AG04450 (cell line): ENCODE measurements at regions of chr1 and their contacts with region 1.

Region 1: DNA sequence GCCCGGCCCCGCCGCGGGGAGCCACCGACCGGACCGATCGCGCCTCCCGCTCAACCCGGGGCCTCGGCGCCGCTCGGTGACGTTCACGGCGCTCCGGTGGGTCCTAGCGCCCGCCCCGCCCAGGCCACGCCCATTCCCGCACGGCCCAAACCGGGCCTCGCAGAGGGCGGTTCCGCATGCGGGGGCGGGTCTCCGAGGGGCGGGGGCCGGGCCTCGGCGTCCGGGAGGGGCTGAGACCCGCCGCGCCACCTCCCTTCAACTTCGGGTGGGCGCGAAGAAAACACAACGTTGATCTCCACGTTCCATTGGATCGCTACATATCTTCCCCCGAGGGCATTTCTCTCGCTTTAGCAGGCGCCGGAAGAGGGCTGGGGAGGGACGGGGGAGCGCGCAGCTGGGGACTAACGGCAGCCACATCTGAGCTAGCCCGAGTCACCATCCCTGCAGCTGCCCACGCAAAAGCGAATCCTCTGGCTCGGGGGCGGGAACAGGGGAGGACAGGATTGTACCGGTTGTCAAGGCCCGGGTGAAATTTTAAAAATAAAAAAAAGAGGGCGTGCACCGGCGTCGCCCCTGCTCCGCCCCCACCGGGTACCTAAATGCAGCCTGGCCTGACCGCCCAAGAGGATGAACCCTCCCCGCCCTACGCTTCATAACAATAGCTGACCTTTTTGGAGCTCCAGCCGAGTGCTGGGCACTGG is at the start of gene MAD2L2:
- DNase-seq: peak; percentile 32
- H3K4me3 ChIP-seq: peak within 1 kb of the TSS; percentile 84
- H3K27ac ChIP-seq: peak within 1 kb of the TSS; percentile 52
- H3K27me3 ChIP-seq: no peaks in the 10 kb centered on the region
- CTCF ChIP-seq: no peak
- polyA plus RNA-seq, gene MAD2L2: 34.9 and 41.7 TPM in 2 replicates

Region 2: GRCh38 chr1:11214698-11215380 is 466.4 kb before region 1 on chr1:
- CTCF ChIA-PET with region 1: no interaction called
- POLR2A ChIA-PET with region 1: no interaction called
- DNase-seq: no peak
- H3K4me3 ChIP-seq: no peak overlapping the region
- H3K27ac ChIP-seq: no peak overlapping the region
- H3K27me3 ChIP-seq: no peaks in the 10 kb centered on the region
- CTCF ChIP-seq: no peak

Region 3: DNA sequence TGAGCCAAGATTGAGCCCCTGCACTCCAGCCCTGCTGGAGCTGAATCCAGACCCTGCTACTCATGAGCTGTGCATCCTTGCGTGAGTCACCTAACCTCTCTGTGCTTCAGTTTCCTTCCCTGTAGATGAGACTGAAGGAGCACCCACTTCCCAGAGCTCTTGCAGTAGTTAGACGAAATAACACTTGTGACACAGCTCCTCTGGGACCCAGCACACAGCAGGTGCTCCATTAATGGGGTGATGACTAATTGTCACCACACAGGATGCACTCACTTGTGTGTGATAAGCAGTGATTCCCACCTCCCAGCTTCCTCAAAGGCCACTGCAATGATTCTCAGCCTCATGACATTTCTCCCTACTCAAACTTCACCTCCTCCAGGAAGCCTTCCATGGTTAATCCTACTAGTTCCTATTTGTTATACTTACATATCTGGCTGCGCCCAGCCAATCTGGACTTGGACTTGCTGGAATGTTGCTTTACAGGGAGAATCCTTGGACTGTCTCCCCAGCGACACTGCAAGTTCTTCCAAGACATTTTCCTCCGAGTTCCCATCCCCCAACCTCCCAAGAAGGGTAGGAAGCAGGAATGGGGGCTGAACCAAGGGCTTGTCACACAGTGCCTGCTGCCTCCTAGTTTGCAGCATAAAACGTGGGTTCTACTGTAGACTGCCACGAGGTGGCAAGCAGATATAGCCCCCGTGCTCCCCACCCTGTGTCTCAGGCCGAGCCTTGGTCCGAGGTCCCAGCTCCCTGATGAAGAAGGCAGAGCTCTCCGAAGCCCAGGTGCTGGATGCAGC is 27.5 kb after region 1 on chr1:
- CTCF ChIA-PET with region 1: interaction called, 12 read pairs
- POLR2A ChIA-PET with region 1: interaction called, 4 read pairs
- DNase-seq: no peak
- H3K4me3 ChIP-seq: no peak overlapping the region
- H3K27ac ChIP-seq: no peak overlapping the region
- H3K27me3 ChIP-seq: peaks cover 12% of the 10 kb centered on the region
- CTCF ChIP-seq: no peak